AG04450 (cell line): ENCODE measurements at regions of chr6 and their contacts with region 1.

Region 1: DNA sequence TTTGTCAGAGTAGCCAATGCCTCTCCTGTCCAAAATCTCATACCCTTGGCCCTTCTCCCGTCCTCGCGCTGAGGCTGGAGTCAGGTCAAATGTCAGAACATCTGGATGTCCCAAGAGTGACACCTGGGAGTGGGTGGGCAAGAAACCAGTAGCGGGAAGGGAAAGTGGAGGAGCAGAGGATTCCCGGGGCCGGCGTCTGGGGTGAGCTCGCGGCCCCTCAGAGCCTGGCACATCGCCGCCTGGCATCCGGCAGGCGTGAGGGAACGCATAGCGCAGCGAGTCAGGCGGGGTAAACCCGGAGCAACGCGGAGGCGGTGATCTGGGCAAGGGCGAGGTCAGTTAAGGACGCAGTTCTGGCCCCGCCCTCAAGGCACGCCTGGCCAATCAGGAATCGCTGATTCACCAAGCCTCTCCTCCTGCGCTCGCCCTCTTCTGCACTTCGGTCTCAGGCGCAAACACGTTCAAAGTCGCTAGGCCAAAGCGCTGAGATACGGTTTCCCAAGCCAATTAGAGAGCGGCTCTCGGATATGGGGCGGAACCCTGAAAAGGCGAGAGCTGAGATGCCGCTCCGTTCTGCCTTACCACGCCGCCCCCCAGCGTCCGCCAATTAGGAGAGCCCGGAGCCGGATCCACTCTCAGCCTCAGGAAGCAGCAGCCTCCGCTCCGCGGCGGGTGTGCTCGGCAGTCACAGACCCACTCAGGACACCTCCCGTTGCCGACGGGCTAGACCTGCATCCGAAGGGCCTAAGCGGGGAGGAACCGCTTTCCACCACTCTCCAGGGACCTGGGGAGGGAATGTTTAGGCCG is 22.5 kb downstream of the VPS52 start:
- DNase-seq: peak; percentile 98
- H3K4me3 ChIP-seq: peak overlapping the region; percentile 80
- H3K27ac ChIP-seq: peak overlapping the region; percentile 97
- H3K27me3 ChIP-seq: no peaks in the 10 kb centered on the region
- CTCF ChIP-seq: peak; percentile 26; the same call in 1 of the 2 replicates

Region 2: DNA sequence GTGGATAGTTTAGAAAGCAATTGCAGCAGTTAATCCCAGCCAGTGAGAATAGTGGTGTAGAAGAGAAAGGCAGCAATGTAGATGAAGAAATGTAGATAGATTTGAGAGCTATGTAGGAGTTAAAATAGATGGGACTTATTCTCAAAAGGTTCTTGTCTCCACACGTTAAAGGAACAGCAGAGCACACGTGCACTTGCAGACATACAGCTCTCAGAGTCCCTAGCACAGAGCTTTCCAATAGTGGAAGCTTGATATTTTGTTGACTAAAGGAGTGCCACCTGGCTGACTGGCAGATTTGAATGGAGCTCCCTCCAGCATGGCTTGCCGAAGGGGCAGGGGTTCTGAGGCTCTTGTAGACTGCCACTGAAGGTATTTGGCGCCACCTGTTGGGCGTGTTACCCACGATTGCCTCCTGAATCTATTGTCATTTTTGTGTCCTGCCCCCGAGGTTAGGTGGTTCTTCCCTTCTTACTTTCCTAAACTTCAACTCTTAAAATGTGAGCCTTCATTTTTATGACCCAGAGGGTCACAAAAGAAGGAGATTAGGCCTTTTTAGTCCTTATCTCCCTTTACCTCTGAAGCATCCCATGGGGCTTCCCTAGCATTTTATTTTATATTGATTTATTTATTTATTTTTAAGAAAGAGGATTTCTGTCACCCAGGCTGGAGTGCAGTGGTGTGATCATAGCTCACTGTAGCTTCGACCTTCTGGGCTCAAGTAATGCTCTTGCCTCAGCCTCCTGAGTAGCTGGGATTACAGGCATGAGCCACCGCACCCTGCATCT is 264.3 kb before region 1 on chr6:
- CTCF ChIA-PET with region 1: interaction called, 10 read pairs
- POLR2A ChIA-PET with region 1: no interaction called
- DNase-seq: peak; percentile 63
- H3K4me3 ChIP-seq: no peak overlapping the region
- H3K27ac ChIP-seq: no peak overlapping the region
- H3K27me3 ChIP-seq: peaks cover 3% of the 10 kb centered on the region
- CTCF ChIP-seq: peak; percentile 92

Region 3: DNA sequence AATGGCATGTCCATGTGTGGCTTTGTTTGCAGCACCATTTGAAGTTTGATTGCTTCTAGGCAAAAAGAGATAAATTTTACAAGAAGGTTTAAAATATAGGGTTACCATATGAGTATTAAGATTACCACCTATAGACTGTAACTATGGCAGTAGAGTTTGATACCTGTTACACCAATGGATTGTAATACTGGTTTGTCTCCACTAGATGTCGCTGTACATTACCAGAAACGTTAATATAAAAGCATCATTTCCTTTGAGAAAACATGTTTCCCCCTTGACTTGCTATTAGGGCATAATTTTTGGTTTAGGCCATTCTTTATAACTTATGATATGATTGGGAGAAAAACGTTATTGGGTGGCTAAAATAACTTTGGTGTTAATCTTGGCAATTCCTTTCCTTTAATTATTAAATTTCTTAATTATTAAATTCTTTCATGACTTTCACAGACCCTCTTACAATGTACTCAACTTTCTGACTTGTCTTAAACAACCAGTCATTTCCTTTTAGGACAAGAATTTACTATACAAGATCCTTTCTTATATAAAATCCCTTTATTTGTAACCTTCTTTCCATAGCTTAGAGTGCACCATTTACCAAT is 130.5 kb before region 1 on chr6:
- CTCF ChIA-PET with region 1: interaction called, 54 read pairs
- POLR2A ChIA-PET with region 1: interaction called, 3 read pairs
- DNase-seq: peak; percentile 8
- H3K4me3 ChIP-seq: no peak overlapping the region
- H3K27ac ChIP-seq: no peak overlapping the region
- H3K27me3 ChIP-seq: peaks cover 39% of the 10 kb centered on the region
- CTCF ChIP-seq: peak; percentile 73

Region 4: DNA sequence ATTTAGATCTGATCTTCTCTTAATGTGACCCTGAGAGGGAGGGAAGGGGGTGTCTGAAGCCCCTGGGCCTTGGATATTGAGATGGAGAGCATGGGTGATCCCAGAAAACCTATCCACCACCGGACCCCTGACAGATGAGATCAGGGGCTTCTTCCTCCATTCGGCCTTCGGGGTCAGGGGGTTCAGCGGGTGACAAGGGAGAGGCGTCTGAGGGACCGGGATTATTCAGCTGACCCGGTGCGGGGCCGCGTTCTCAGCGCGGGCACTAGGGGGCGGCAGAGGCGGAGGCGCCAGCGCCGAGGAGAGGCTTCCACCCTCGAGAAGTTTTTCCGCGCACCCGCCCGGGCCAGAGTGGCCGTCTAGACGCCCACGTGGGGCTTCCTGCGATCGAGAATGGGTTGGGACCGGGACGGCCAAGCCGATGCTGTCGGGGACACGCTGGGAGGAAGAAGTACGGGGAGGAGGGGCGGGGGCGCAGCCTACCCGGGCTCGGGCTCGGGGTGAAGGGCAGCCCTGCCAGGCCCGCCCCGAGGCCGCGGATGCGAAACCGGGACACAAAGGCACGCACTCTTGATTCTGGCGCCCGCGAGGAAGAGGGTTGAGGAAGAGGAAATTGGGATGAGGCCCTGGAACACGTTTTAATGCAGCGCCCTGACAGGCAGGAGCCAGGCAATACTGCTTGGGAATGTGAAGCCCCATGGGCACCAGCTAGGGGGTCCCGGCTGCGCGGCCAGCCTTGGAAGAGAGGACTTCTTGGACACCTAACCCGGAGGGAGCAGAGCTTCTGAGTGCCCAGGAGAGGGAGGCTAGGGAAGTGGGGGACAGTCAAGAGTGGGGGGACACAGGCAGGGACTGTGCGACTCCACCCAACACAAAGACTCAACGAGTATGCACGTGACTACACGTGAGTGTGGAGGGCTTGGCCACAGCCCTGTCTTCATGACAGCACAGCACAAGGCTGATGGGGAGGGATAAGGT is 87.5 kb before region 1 on chr6:
- CTCF ChIA-PET with region 1: interaction called, 19 read pairs
- POLR2A ChIA-PET with region 1: no interaction called
- DNase-seq: no peak
- H3K4me3 ChIP-seq: peak overlapping the region; percentile 55
- H3K27ac ChIP-seq: no peak overlapping the region
- H3K27me3 ChIP-seq: peaks cover 11% of the 10 kb centered on the region
- CTCF ChIP-seq: peak; percentile 90

Region 5: GRCh38 chr6:33235221-33235634 is 13.9 kb before region 1 on chr6:
- CTCF ChIA-PET with region 1: interaction called, 48 read pairs
- POLR2A ChIA-PET with region 1: no interaction called
- DNase-seq: no peak
- H3K4me3 ChIP-seq: no peak overlapping the region
- H3K27ac ChIP-seq: no peak overlapping the region
- H3K27me3 ChIP-seq: peaks cover 33% of the 10 kb centered on the region
- CTCF ChIP-seq: no peak

Region 6: GRCh38 chr6:33271458-33272274 is 22.5 kb after region 1 on chr6 and contains the starts of genes RPS18 and VPS52:
- CTCF ChIA-PET with region 1: no interaction called
- POLR2A ChIA-PET with region 1: interaction called, 52 read pairs
- DNase-seq: peak; percentile 98
- H3K4me3 ChIP-seq: peak within 1 kb of the TSS; percentile 94
- H3K27ac ChIP-seq: peak within 1 kb of the TSS; percentile 94
- H3K27me3 ChIP-seq: no peaks in the 10 kb centered on the region
- CTCF ChIP-seq: no peak
- polyA plus RNA-seq, gene RPS18: 5,380 and 5,823 TPM in 2 replicates
- polyA plus RNA-seq, gene VPS52: 58.0 and 60.4 TPM in 2 replicates

Region 7: DNA sequence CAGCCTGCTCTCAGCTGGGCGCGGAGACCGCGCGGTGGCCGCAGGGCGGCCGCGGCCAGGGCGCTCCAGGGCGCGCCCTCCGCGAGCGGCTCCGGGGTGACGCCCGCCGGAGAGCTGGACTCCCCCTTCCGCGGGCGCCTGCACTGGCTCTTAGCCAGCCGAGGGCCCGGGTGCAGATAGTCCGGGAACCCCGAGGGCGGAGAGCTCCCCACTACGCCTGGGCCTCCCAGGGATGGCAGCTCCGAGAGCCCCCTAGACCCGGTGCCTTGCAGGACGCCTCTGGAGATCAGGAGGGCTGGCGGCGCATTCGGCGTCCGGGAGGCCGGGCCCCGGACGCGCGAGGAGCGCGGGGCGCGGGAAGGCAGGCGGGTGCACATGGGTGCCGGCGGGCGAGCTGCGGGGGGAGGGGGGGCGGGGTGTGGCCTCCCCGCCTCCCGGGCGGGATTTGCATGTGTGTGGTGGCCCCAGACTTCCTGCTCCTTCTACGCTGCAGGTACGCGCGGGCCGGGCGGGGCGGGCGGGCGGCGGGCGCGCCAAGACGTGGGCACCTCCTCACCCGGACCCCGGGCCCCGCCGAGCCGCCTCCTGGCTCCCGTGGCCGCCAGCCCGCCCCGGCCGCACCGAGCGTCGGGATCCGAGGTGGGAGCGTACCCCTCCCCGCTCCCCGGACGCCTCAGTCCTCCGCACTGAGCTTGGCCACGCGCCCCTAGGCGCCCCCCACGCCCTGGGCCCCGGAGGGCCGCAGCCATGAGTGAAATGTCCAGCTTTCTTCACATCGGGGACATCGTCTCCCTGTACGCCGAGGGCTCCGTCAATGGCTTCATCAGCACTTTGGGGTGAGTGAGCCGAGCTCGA is 372.0 kb after region 1 on chr6 and contains the start of gene ITPR3:
- CTCF ChIA-PET with region 1: no interaction called
- POLR2A ChIA-PET with region 1: no interaction called
- DNase-seq: no peak
- H3K4me3 ChIP-seq: peak within 1 kb of the TSS; percentile 63
- H3K27ac ChIP-seq: no peak within 1 kb of the TSS
- H3K27me3 ChIP-seq: no peaks in the 10 kb centered on the region
- CTCF ChIP-seq: no peak
- polyA plus RNA-seq, gene ITPR3: 4.4 and 4.8 TPM in 2 replicates

Region 8: DNA sequence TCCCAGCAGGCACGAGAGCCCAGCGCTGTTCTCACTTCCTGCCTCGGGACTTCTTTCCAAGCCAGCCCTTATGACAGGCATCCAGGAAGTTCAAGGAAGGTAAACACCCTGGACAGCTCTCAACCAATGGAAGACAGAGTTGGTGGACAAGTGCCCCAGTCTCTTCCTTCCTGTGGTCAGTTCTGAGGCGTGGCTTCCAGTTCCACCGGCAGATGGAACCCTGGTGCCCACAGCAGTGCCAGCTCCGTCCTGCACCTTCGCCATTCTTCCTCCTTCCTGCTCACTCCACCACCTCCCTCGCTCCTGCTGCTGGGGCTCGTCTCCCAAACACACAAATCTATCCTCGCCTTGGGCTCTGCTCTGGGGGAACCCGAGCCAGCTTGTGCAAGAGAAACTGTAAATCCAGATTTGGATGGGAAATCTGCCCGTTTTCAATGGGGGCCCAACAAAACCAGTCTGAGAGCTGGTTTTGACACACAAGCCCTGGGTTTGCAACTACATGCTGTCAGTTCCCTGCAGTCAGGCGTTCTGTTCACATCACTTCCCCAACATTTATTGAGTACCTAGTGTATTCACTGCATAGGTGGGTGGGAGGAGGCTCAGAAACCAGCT is 734.1 kb after region 1 on chr6:
- CTCF ChIA-PET with region 1: no interaction called
- POLR2A ChIA-PET with region 1: no interaction called
- DNase-seq: no peak
- H3K4me3 ChIP-seq: no peak overlapping the region
- H3K27ac ChIP-seq: no peak overlapping the region
- H3K27me3 ChIP-seq: peaks cover 21% of the 10 kb centered on the region
- CTCF ChIP-seq: no peak